ENCODE measurements at regions of chr14 and their contacts with region 1.

Region 1: GRCh38 chr14:51157012-51157411 is 62.1 kb upstream of the TRIM9 start:
- DNase-seq: peak in 1 of 2 experiments; percentile 32
- H3K4me3 ChIP-seq: no peak overlapping the region
- H3K4me3 Mint-ChIP-seq: no peak overlapping the region
- H3K27ac Mint-ChIP-seq: no peak overlapping the region
- H3K4me1 ChIP-seq: no peaks in the 10 kb centered on the region
- H3K4me1 Mint-ChIP-seq: no peaks in the 10 kb centered on the region
- H3K27me3 ChIP-seq: no peaks in the 10 kb centered on the region
- H3K27me3 Mint-ChIP-seq: no peaks in the 10 kb centered on the region
- CTCF ChIP-seq: peak; percentile 53 to 55

Region 2: DNA sequence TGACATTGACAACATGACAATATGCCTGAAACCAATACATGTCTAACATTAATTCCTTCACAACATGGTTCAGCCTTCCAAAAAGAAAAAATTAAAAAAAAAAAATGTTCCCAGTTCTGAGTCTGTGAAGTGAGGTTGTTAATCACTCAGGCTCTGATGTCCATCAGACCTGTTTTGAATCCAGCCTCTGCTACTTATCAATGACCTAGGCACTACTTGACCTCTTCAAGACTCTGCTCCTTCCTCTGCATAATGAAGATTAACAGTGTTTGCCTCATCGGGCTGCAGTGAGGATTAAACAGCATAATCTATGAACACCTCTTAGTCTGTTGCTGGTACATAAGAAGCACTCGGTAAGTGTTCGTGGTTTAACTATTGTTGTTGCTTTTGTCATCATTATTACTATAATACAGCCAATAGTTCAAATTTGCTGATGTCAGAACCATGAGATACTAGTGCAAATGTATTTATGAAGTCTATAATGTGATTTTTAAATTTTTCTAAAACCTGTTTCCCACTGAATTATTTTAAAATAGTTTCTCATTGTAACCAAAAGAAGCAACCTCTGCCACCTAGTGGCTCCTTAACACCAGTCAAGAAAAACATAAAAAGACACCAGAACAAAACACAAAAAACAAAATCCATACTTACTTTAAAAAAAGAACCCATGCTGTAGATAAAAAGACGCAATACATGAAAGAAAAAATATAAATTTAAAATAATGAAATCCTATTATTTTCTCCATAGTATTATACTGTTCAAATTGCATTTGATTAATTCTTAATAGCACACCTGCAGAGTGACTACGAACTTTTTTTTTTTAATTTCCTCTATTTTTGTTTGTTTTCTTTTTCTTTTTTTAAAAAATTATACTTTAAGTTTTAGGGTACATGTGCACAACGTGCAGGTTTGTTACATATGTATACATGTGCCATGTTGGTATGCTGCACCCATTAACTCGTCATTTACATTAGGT is 62.7 kb after region 1 on chr14:
- CTCF ChIA-PET with region 1: interaction called, 22 read pairs
- POLR2A ChIA-PET with region 1: no interaction called
- intact Hi-C with region 1: loop called (anchors 1 kb)
- DNase-seq: no peak
- H3K4me3 ChIP-seq: no peak overlapping the region
- H3K4me3 Mint-ChIP-seq: no peak overlapping the region
- H3K27ac Mint-ChIP-seq: no peak overlapping the region
- H3K4me1 ChIP-seq: no peaks in the 10 kb centered on the region
- H3K4me1 Mint-ChIP-seq: no peaks in the 10 kb centered on the region
- H3K27me3 ChIP-seq: no peaks in the 10 kb centered on the region
- H3K27me3 Mint-ChIP-seq: no peaks in the 10 kb centered on the region
- CTCF ChIP-seq: peak; percentile 50 to 73

Region 3: GRCh38 chr14:51780006-51780692 is 623.1 kb after region 1 on chr14:
- CTCF ChIA-PET with region 1: no interaction called
- POLR2A ChIA-PET with region 1: no interaction called
- intact Hi-C with region 1: loop called (anchors 2 kb)
- DNase-seq: peak; percentile 64 to 77
- H3K4me3 ChIP-seq: no peak overlapping the region
- H3K4me3 Mint-ChIP-seq: peak overlapping the region; percentile 38
- H3K27ac Mint-ChIP-seq: no peak overlapping the region
- H3K4me1 ChIP-seq: no peaks in the 10 kb centered on the region
- H3K4me1 Mint-ChIP-seq: peaks cover 8% of the 10 kb centered on the region
- H3K27me3 ChIP-seq: no peaks in the 10 kb centered on the region
- H3K27me3 Mint-ChIP-seq: peaks cover 3% of the 10 kb centered on the region
- CTCF ChIP-seq: peak; percentile 79 to 87